HCT116 (cell line): ENCODE measurements at regions of chr11 and their contacts with region 1.

Region 1: DNA sequence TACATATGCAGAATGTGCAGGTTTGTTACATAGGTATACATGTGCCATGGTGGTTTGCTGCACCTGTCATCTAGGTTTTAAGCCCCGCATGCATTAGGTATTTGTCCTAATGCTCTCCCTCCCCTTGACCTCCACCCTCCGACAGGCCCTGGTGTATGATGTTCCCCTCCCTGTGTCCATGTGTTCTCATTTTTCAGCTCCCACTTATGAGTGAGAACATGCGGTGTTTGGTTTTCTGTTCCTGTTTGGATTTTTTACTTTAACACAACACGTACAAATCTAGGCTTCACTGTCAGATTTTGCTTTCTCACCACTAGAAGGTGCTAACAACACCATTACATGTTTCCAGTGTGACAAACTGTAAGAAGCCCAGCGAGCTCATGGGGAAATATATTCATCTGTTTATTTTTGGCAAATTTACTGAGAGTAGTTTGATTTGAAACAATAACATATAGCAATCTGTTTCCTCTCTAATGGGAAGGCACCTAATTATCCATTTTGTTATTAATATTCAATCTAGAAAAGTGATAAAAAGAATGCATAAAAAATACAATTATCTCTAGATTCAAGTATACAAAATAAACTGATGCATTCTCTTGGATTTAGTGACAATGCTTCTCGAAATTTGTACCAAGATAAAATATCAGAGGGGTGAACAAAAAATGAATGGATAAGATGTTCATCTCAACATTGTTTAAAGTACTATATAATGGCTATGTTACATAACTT is 23.2 kb upstream of the BIRC3 start:
- DNase-seq: peak; percentile 62
- ATAC-seq: peak; percentile 95
- H3K4me3 ChIP-seq: no peak overlapping the region
- H3K27ac ChIP-seq: no peak overlapping the region
- H3K4me1 ChIP-seq: peaks cover 0 to 3% of the 10 kb centered on the region in 2 experiments; a peak in 1 of 4 replicates
- H3K27me3 ChIP-seq: no peaks in the 10 kb centered on the region
- CTCF ChIP-seq: peak; percentile 76 to 79 (median 78)
- POLR2A ChIP-seq: no peak
- RAD21 ChIP-seq: peak; percentile 70

Region 2: GRCh38 chr11:102187416-102188151 is 106.5 kb before region 1 on chr11:
- CTCF ChIA-PET with region 1: no interaction called
- POLR2A ChIA-PET with region 1: no interaction called
- RAD21 ChIA-PET with region 1: no interaction called
- intact Hi-C with region 1: no loop called
- DNase-seq: no peak
- ATAC-seq: no peak
- H3K4me3 ChIP-seq: no peak overlapping the region
- H3K27ac ChIP-seq: no peak overlapping the region
- H3K4me1 ChIP-seq: peaks cover 0 to 12% of the 10 kb centered on the region in 2 experiments; a peak in 1 of 4 replicates
- H3K27me3 ChIP-seq: no peaks in the 10 kb centered on the region
- CTCF ChIP-seq: no peak
- POLR2A ChIP-seq: no peak
- RAD21 ChIP-seq: no peak

Region 3: DNA sequence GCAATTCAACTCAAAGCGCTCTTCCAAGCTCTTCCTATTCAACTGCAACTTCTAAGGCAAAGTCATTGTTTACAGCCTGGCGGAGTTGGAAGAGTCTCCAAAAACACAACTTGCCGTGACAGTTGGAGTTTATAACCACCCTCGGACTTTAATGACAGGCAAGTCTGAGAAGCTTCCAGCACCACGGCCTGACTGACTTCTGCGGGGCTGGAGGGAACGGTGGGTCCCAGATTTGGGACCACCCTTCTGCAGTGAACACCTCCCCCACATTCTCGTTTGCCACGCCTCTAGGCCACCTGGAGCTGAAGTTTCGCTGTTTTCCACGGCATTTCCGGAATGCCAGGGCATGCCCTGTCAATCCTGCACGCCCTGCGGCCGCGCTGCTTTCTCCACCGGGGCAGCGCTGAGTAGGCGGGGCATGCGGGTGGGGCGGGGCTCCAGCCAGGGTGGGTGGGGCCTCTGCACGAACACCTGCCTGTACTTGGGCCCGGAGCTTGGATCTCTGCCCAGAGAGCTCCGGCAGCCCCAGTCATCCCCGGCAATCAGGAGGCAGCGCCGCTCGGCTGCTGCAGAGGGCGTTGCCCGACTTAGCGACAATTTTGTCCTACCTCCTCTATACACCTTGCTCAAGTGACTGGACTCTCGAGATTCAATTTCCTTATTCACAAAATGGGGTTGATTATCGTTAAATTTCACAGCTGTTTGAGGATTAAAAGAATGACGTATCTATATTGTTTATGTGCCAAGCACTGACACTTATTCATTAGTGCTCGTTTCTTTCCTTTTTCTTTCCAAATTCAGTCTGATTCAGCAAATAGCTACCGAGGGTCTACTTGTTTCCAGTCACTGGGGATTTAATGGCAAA is 25.5 kb before region 1 on chr11:
- CTCF ChIA-PET with region 1: interaction called, 10 read pairs
- POLR2A ChIA-PET with region 1: no interaction called
- RAD21 ChIA-PET with region 1: no interaction called
- intact Hi-C with region 1: no loop called
- DNase-seq: peak; percentile 92
- ATAC-seq: peak; percentile 92
- H3K4me3 ChIP-seq: peak overlapping the region; percentile 34 to 55
- H3K27ac ChIP-seq: peak overlapping the region; percentile 47
- H3K4me1 ChIP-seq: peaks cover 17 to 34% of the 10 kb centered on the region in 2 experiments
- H3K27me3 ChIP-seq: no peaks in the 10 kb centered on the region
- CTCF ChIP-seq: peak; percentile 52 to 61 (median 53)
- POLR2A ChIP-seq: no peak
- RAD21 ChIP-seq: peak; percentile 84

Region 4: DNA sequence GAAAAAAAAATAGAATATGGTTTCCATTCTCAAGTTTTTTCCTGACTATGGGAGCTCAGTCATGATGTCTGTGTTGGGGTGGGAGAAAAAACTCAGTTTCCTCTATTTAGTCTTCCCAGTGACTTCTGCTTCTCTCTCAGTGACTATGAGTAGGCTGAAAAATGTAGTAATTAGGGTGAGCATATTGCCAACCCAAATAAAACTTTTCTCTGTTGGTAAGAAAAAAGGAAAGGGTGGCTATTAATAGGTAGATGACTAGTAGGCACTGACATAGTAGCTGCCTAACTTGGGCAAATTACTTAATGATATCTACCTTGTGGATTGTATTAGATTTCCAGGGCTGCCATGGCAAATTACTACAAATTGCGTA is 10.9 kb before region 1 on chr11:
- CTCF ChIA-PET with region 1: interaction called, 19 read pairs
- POLR2A ChIA-PET with region 1: interaction called, 7 read pairs
- RAD21 ChIA-PET with region 1: no interaction called
- intact Hi-C with region 1: no loop called
- DNase-seq: no peak
- ATAC-seq: no peak
- H3K4me3 ChIP-seq: no peak overlapping the region
- H3K27ac ChIP-seq: no peak overlapping the region
- H3K4me1 ChIP-seq: peaks cover 0 to 9% of the 10 kb centered on the region in 2 experiments; a peak in 2 of 4 replicates
- H3K27me3 ChIP-seq: no peaks in the 10 kb centered on the region
- CTCF ChIP-seq: no peak
- POLR2A ChIP-seq: no peak
- RAD21 ChIP-seq: no peak

Region 5: GRCh38 chr11:102306048-102306585 is 12.1 kb after region 1 on chr11:
- CTCF ChIA-PET with region 1: interaction called, 21 read pairs
- POLR2A ChIA-PET with region 1: no interaction called
- RAD21 ChIA-PET with region 1: interaction called in 1 of 2 experiments, 5 read pairs
- intact Hi-C with region 1: no loop called
- DNase-seq: no peak
- ATAC-seq: peak; percentile 81
- H3K4me3 ChIP-seq: peak overlapping the region; percentile 18 to 47
- H3K27ac ChIP-seq: no peak overlapping the region
- H3K4me1 ChIP-seq: peaks cover 9 to 25% of the 10 kb centered on the region in 2 experiments
- H3K27me3 ChIP-seq: no peaks in the 10 kb centered on the region
- CTCF ChIP-seq: peak in 2 of 3 experiments; percentile 51 to 59; a peak in 4 of 6 replicates
- POLR2A ChIP-seq: no peak
- RAD21 ChIP-seq: peak; percentile 16; the same call in 1 of the 2 replicates

Region 6: DNA sequence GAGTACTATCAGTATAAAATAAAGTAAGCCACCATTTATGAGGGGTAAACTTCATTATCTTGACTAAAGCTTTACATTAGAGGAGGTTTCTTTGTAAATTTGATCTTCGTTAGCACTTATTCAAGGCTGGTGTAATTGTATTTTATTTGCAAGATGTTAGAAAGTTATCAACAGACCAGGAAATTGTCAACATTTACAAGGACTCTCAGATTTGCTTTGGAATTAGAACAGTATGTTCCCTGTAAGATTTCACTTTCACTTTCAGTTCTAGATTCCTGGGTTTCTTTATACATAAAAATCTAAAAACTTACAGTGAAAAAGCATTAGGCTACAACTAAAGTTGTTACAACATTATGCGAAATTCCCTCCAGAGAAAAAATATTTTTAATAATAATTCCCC is 18.6 kb after region 1 on chr11:
- CTCF ChIA-PET with region 1: interaction called, 17 read pairs
- POLR2A ChIA-PET with region 1: no interaction called
- RAD21 ChIA-PET with region 1: no interaction called
- intact Hi-C with region 1: no loop called
- DNase-seq: no peak
- ATAC-seq: no peak
- H3K4me3 ChIP-seq: peak overlapping the region; percentile 35 to 59
- H3K27ac ChIP-seq: no peak overlapping the region
- H3K4me1 ChIP-seq: peaks cover 7 to 31% of the 10 kb centered on the region in 2 experiments
- H3K27me3 ChIP-seq: no peaks in the 10 kb centered on the region
- CTCF ChIP-seq: no peak
- POLR2A ChIP-seq: no peak
- RAD21 ChIP-seq: no peak

Region 7: GRCh38 chr11:102341844-102342318 is 47.8 kb after region 1 on chr11:
- CTCF ChIA-PET with region 1: interaction called, 19 read pairs
- POLR2A ChIA-PET with region 1: interaction called, 3 read pairs
- RAD21 ChIA-PET with region 1: interaction called in 1 of 2 experiments, 3 read pairs
- intact Hi-C with region 1: loop called (anchors 2 kb)
- DNase-seq: peak; percentile 89
- ATAC-seq: peak; percentile 83
- H3K4me3 ChIP-seq: no peak overlapping the region
- H3K27ac ChIP-seq: no peak overlapping the region
- H3K4me1 ChIP-seq: peaks cover 2 to 29% of the 10 kb centered on the region in 2 experiments; a peak in 3 of 4 replicates
- H3K27me3 ChIP-seq: no peaks in the 10 kb centered on the region
- CTCF ChIP-seq: peak; percentile 77 to 87 (median 86)
- POLR2A ChIP-seq: no peak
- RAD21 ChIP-seq: peak; percentile 91

Region 8: DNA sequence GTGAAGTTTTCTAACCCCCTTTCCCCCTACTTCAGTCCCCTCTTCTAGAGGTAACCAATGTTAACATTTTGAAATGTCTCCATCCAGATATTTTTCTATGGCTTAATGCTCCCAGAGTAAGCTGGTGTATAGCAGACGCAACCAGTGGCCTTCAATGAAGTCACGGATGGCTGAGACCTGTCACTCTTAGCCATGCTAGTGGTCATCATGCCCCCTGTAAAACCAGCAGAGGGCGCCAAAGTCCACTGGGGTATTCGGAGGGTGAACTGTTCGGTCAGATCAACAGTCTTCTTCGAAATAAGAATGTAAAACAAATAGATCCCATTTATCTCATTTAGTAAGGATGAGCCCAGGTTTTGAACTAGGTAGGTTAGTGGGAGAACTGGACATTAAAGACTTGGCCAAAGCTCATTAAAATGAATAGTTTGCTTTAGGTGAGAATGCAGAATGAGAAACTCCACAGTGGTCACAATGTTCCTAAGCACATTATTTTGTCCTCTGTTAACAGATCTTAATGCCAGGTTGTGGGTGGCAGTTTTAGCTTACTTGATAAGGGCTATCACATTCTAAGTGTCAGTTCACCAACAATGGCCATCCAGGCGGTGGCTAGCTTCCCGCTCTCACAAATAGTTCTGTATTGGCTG is 439.3 kb after region 1 on chr11:
- CTCF ChIA-PET with region 1: no interaction called
- POLR2A ChIA-PET with region 1: no interaction called
- RAD21 ChIA-PET with region 1: no interaction called
- intact Hi-C with region 1: no loop called
- DNase-seq: peak; percentile 57
- ATAC-seq: peak; percentile 99
- H3K4me3 ChIP-seq: no peak overlapping the region
- H3K27ac ChIP-seq: no peak overlapping the region
- H3K4me1 ChIP-seq: no peaks in the 10 kb centered on the region
- H3K27me3 ChIP-seq: no peaks in the 10 kb centered on the region
- CTCF ChIP-seq: peak; percentile 86 to 95 (median 89)
- POLR2A ChIP-seq: no peak
- RAD21 ChIP-seq: peak; percentile 95